ENCODE measurements at regions of chr6 and their contacts with region 1.

Region 1: DNA sequence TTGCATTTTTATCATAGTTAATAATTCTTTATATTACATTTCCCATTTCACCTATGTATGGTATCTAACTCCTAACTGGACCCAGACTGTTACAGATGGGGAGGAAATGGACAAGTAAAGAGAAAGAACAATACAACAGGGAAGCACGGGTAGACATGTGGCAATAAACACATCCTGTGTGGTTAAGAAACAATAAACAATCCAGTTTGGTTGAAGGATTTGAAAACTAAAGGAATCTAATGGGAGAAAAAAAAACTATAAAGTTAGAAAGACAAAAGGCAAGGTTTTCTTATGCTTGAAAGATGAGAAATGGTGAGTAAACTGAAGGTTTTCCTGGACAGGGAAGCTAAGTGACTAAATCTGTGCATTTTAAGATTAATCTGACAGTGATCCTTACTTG is 34.9 kb upstream of the ALDH8A1 start:
- DNase-seq: no peak
- ATAC-seq: no peak

Region 2: DNA sequence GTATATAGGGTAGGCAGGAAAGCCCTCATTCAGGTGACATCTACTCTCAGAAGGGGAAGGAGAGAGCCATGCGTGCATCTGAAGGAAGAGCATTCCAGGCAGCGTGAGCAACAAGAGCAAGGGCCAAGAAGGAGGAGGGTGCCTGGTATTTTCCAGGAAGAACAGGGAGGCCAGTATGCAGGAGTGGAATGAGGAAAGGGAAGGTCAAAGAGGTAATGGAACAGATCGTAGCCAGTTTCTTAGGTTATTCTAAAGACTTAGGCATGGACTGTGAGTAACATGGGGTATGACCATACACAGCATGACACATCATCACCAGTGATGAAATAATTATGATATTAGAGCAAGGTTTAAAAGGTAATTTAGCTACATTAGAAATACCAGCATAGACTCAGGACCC is 59.0 kb before region 1 on chr6:
- intact Hi-C with region 1: no loop called
- DNase-seq: no peak
- ATAC-seq: no peak

Region 3: DNA sequence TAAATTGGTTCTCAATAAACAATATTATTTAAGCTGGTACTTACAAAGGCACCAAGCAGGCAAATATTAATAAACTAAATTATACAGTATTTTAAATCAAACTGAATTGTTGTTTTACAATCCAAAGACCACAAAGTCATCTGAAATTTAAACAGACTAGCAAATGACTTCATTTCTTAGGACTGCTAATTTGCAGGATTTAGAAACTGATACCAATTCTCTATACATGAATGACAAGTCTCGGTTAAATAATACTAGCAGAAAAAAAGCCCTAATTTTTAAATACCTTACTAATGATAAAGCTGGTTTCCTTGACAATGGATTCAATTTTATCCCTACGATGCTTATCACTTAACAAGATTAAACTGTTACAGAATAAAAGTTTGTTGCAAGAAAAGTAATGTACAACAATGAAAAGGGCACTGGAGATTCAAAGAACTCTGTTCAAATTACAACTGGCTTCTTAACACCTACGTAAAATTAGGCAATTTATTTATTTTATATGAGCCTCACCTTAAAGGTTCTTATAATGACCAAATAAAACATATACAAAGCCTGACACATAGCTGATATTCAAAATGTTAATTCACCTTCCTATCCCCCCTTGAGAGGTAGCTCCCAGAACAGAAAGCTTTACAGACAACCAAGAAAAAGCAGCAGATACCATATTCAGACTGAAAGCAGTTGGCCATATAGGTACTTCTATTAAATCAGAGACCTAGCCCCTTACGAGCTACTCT is 36.7 kb after region 1 on chr6:
- intact Hi-C with region 1: no loop called
- DNase-seq: no peak
- ATAC-seq: no peak

Region 4: GRCh38 chr6:135052939-135053338 is 68.1 kb after region 1 on chr6:
- intact Hi-C with region 1: loop called (anchors 2 kb)
- DNase-seq: no peak
- ATAC-seq: no peak